Transverse colon (tissue), 4 donors: ENCODE measurements at regions of chr16 and their contacts with region 1.

Region 1: DNA sequence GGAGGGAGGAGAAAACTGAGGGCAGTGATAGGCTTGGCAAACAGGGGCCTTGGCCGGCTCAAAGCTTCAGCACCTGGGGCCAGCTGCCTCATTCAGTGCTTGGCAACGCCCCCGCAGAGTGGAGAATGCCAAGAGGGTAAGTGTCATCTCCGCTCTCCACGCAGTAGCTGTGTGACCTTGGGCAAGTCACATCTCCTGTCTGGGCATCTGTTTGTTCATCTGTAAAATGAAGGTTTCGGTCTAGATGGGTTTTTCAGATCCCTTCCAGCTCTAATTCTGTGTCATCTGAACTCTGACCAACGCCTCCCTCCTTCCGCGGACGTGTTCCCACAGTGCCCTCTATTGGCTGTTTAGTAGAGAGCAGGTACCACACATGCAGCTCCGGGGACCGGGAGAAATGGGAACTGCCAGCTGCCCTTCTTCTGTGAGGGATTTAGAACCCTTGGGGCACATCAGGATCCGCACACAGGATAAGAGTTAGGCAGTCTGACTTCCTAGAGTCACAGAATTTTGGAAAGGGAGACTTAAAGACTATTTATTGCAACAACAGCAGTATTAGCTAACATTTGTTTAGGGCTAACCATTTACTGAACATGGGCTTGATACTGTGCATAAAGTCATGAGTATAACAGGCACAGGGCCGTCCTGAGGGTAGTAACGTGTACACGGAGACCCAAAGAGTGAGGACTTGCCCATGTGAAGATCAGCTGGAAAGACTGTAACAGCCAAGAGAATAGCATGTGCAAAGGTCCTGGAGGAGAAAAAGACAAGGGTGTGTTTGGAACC is 26.8 kb downstream of the GP2 start:
- DNase-seq: peak; percentile 43
- H3K4me3 ChIP-seq: no peak overlapping the region
- H3K27ac ChIP-seq: no peak overlapping the region
- H3K4me1 ChIP-seq: no peaks in the 10 kb centered on the region
- H3K27me3 ChIP-seq: no peaks in the 10 kb centered on the region
- CTCF ChIP-seq: peak; percentile 41 to 67 (median 65)
- EP300 ChIP-seq: no peak
- POLR2A ChIP-seq: no peak

Region 2: DNA sequence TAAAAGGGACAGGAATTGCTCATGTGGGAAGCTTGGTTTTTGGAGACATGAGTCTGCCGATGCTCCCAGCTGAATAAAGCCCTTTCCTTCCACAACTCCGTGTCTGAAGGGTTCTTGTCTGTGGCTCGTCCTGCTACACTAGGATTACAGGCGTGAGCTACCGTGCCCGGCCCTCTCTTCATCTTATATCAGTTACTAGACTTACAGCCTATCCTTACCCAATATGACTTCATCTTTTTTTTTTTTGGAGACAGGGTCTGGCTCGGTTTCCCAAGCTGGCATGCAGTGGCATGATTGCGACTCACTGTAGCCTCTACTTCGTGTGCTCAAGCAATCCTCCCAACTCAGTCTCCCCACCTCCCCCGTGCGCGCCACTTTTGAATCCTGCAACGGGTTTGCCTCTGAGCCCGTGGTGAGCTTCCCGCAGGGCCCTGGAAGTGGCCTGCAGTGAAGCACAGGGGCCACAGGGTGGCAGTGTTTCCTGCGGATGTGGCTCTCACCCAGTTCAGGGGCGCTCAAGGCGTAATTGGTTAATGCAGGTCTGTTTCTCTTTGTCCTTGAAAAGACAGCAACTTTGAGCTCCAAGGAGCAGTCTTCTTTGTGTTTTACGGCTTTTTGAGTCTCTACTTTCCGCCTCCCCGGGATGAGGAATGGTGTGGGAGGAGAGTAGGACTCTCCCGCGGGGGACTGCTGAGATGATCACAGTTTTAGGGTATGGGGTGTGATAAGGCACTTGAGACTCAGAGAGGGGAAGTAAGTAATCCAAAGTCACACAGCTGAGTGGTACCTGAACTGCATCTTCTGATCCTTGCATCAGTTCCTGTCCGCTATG is 393.1 kb before region 1 on chr16:
- in situ Hi-C with region 1: loop called in 2 of 4 experiments (anchors 10 kb)
- intact Hi-C with region 1: loop called (anchors 10 kb)
- DNase-seq: peak; percentile 67
- H3K4me3 ChIP-seq: no peak overlapping the region
- H3K27ac ChIP-seq: no peak overlapping the region
- H3K4me1 ChIP-seq: no peaks in the 10 kb centered on the region
- H3K27me3 ChIP-seq: no peaks in the 10 kb centered on the region
- CTCF ChIP-seq: peak; percentile 83 to 95 (median 93)
- EP300 ChIP-seq: no peak
- POLR2A ChIP-seq: no peak

Region 3: GRCh38 chr16:20359997-20360396 is 59.5 kb after region 1 on chr16:
- in situ Hi-C with region 1: no loop called
- intact Hi-C with region 1: no loop called
- DNase-seq: no peak
- H3K4me3 ChIP-seq: no peak overlapping the region
- H3K27ac ChIP-seq: no peak overlapping the region
- H3K4me1 ChIP-seq: no peaks in the 10 kb centered on the region
- H3K27me3 ChIP-seq: peaks cover 3% of the 10 kb centered on the region
- CTCF ChIP-seq: no peak
- EP300 ChIP-seq: no peak
- POLR2A ChIP-seq: no peak